Calu3 (cell line): ENCODE measurements at regions of chr2 and their contacts with region 1.

Region 1: DNA sequence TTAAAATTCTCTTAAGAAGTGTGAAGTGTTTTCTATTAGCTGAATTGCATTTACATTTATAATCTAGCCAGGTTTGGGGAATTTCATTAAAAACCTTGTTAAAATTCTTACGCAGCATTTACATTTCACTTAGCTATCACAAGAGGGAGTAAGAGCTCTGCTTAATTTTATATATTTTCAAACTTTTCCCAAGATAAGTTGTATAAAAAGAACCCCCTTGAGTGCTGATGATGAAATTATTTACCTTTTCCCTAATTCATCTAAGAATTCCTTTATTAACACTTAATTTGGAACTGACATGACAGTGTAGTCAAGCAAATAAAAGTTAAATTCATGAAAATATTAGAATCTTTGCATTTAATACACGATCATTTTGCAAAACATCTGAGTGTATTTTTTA is 54.2 kb upstream of the ZSWIM2 start:
- DNase-seq: no peak
- H3K4me3 Mint-ChIP-seq: no peak overlapping the region
- H3K27ac Mint-ChIP-seq: no peak overlapping the region
- H3K4me1 Mint-ChIP-seq: peaks cover 9% of the 10 kb centered on the region
- H3K27me3 Mint-ChIP-seq: no peaks in the 10 kb centered on the region
- CTCF ChIP-seq: peak; percentile 48

Region 2: DNA sequence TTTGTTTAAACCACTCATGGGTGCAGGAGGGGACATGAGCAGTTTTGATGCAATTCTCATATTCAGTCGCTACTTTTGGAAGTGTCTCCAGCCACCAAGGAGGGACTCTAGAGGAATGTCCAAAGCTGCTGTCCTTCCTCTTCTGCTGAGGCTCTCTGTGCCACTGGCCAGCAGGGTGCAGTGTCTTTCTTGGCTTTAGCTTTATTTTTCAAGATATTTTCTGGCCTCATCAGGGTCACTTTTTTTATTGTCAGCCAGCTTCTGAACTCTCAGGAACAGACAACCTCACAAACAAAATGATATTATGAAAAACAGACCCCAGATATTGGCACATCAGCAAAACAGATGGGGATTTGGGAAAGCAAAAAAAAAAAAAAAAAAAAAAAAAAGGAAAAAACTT is 235.0 kb after region 1 on chr2:
- CTCF ChIA-PET with region 1: no interaction called
- intact Hi-C with region 1: loop called (anchors 5 kb)
- DNase-seq: peak; percentile 49
- H3K4me3 Mint-ChIP-seq: no peak overlapping the region
- H3K27ac Mint-ChIP-seq: no peak overlapping the region
- H3K4me1 Mint-ChIP-seq: no peaks in the 10 kb centered on the region
- H3K27me3 Mint-ChIP-seq: no peaks in the 10 kb centered on the region
- CTCF ChIP-seq: peak; percentile 73

Region 3: GRCh38 chr2:187319441-187320108 is 416.4 kb after region 1 on chr2:
- CTCF ChIA-PET with region 1: no interaction called
- intact Hi-C with region 1: loop called (anchors 10 kb)
- DNase-seq: no peak
- H3K4me3 Mint-ChIP-seq: no peak overlapping the region
- H3K27ac Mint-ChIP-seq: no peak overlapping the region
- H3K4me1 Mint-ChIP-seq: no peaks in the 10 kb centered on the region
- H3K27me3 Mint-ChIP-seq: no peaks in the 10 kb centered on the region
- CTCF ChIP-seq: no peak